Esophagus muscularis mucosa (tissue), 4 donors: ENCODE measurements at regions of chr9 and their contacts with region 1.

Region 1: GRCh38 chr9:86202338-86202882 is 57.0 kb downstream of the C9orf153 start:
- DNase-seq: no peak
- H3K4me3 ChIP-seq: no peak overlapping the region
- H3K27ac ChIP-seq: no peak overlapping the region
- H3K4me1 ChIP-seq: peaks cover 0 to 6% (median 2%) of the 10 kb centered on the region in 4 donors
- H3K27me3 ChIP-seq: no peaks in the 10 kb centered on the region
- CTCF ChIP-seq: peak; percentile 58 to 78 (median 63)
- EP300 ChIP-seq: no peak
- POLR2A ChIP-seq: no peak

Region 2: GRCh38 chr9:86275962-86276361 is 73.6 kb after region 1 on chr9:
- intact Hi-C with region 1: loop called (anchors 10 kb)
- DNase-seq: no peak
- H3K4me3 ChIP-seq: no peak overlapping the region
- H3K27ac ChIP-seq: no peak overlapping the region
- H3K4me1 ChIP-seq: peaks cover 46 to 58% (median 54%) of the 10 kb centered on the region in 4 donors
- H3K27me3 ChIP-seq: no peaks in the 10 kb centered on the region
- CTCF ChIP-seq: no peak
- EP300 ChIP-seq: no peak
- POLR2A ChIP-seq: no peak